ENCODE measurements at regions of chr22 and their contacts with region 1.

Region 1: GRCh38 chr22:39532215-39533071 is at the start of gene RPS19BP1:
- DNase-seq: peak; percentile 100
- H3K4me3 ChIP-seq: peak within 1 kb of the TSS; percentile 66 to 94 (median 84)
- H3K27ac ChIP-seq: peak within 1 kb of the TSS; percentile 91 to 97 (median 96)
- H3K4me1 ChIP-seq: peaks cover 37 to 54% (median 45%) of the 10 kb centered on the region in 4 donors
- H3K27me3 ChIP-seq: no peaks in the 10 kb centered on the region
- CTCF ChIP-seq: no peak
- EP300 ChIP-seq: no peak
- POLR2A ChIP-seq: peak; percentile 91
- total RNA-seq, gene RPS19BP1: 20.5 to 153 (median 97.8) TPM

Region 2: DNA sequence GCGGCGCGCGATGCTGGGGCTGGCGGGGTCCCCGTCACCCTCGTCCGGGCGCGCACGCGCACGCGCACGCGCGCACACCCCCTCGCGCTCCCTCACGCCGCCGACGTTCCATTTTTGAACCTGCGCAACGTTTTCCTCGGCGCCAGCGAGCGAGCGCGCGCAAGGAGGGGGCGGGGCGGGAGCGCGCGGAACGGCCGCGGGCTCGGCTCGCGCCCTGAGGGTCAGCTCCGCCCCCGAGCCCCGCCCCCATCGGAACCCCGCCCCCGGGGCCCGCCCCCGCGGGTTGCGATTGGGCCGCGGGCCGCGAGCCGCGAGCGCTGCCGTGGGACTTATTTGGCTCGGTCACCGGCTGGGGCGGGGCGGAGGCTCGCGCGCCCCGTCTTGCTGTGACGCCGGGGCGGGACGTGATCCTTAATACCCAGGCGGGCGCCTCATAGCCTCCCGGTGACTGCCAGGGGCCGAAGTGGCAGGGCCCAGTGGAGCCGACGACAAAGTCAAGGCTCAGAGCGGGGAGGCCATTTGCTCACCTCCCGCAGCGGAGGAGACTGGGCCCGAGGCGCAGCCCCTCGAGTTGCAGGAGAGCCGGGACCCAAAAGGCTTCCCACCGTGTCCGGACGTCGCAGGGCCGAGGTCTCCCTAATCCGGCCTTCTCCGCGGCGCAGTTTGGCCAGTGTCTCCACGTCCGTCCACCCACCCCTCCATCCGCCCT is 379.8 kb before region 1 on chr22 and contains the start of gene CBX7:
- in situ Hi-C with region 1: loop called in 1 of 4 experiments (anchors 25 kb)
- intact Hi-C with region 1: no loop called
- DNase-seq: peak; percentile 94
- H3K4me3 ChIP-seq: peak within 1 kb of the TSS; percentile 78 to 100 (median 90)
- H3K27ac ChIP-seq: peak within 1 kb of the TSS; percentile 91 to 98 (median 96)
- H3K4me1 ChIP-seq: peaks cover 14 to 52% (median 46%) of the 10 kb centered on the region in 4 donors
- H3K27me3 ChIP-seq: peaks cover 33% of the 10 kb centered on the region
- CTCF ChIP-seq: no peak
- EP300 ChIP-seq: no peak
- POLR2A ChIP-seq: peak; percentile 73
- total RNA-seq, gene CBX7: 15.3 to 129 (median 58.4) TPM

Region 3: DNA sequence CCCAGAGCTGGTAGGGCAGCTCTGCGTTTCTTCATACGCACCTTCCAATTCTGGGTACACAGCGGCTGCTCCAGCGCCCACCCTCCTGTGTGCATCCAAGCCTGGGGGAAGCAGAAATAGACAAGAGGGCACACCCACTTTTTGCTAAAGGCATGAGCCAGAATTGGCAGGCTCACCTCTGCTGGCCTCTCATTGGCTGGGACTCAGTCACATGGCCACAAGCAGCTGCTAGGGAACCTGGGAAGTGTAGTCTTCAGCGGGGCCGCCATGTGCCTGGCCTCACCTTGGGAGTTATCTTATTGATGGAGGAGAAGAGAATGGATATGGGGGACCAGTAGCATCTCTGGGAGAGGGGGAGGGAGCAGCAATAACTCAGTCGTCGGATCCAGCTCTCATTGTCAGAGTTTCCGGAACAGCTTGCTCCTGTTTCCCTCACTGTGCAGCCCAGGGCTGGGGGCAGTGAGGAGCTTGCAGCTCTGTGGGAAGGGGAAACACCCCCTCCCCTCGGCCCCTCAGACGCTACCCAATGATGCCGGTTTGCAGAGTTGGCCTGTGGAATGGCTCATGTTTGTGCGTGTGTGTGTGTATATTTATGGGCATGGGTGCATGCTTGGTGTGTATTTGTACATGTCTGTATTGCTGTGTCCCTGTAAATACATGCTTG is 42.2 kb before region 1 on chr22:
- in situ Hi-C with region 1: loop called in 1 of 4 experiments (anchors 5 kb)
- intact Hi-C with region 1: no loop called
- DNase-seq: peak; percentile 71
- H3K4me3 ChIP-seq: no peak overlapping the region
- H3K27ac ChIP-seq: no peak overlapping the region
- H3K4me1 ChIP-seq: peaks cover 0 to 11% (median 3%) of the 10 kb centered on the region in 4 donors
- H3K27me3 ChIP-seq: no peaks in the 10 kb centered on the region
- CTCF ChIP-seq: no peak
- EP300 ChIP-seq: no peak
- POLR2A ChIP-seq: no peak

Region 4: DNA sequence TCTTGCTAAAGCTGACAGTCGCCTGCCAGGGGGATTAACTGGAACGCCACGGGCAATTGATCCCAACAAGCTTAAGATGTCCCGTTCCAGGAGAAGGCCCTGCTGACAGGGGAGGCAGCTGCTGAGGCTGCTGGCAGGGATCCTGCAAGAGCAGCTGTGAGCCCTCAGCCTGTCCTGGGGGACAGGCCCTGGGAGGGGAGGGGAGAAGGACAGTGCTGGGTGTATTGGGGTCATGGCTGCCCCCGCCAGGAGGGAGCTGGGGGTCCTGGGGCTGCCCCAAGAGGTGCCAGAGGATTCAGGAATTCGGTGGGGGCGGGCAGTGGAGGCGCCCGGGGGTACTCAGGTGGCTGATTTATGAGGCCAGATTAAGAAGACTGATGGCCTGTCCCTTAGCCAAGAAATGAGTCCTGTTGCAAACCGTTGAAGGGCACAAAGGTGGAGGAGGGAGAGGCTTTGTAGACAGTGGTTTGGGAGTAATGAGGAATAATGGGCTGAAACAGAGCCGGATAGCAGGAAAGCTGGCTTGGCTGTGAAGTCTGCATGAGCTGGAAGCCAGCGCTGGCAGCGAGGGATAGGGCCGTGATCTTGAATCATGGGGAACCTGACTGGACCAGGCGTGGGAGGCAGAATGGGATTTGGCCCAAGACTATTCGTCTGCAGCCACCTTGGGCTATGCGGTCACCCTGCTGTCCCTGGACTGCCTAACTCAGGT is 171.6 kb after region 1 on chr22:
- in situ Hi-C with region 1: no loop called
- intact Hi-C with region 1: no loop called
- DNase-seq: peak; percentile 17
- H3K4me3 ChIP-seq: no peak overlapping the region
- H3K27ac ChIP-seq: no peak overlapping the region
- H3K4me1 ChIP-seq: peaks cover 0 to 5% (median 0%) of the 10 kb centered on the region in 4 donors
- H3K27me3 ChIP-seq: peaks cover 3% of the 10 kb centered on the region
- CTCF ChIP-seq: no peak
- EP300 ChIP-seq: no peak
- POLR2A ChIP-seq: no peak

Region 5: DNA sequence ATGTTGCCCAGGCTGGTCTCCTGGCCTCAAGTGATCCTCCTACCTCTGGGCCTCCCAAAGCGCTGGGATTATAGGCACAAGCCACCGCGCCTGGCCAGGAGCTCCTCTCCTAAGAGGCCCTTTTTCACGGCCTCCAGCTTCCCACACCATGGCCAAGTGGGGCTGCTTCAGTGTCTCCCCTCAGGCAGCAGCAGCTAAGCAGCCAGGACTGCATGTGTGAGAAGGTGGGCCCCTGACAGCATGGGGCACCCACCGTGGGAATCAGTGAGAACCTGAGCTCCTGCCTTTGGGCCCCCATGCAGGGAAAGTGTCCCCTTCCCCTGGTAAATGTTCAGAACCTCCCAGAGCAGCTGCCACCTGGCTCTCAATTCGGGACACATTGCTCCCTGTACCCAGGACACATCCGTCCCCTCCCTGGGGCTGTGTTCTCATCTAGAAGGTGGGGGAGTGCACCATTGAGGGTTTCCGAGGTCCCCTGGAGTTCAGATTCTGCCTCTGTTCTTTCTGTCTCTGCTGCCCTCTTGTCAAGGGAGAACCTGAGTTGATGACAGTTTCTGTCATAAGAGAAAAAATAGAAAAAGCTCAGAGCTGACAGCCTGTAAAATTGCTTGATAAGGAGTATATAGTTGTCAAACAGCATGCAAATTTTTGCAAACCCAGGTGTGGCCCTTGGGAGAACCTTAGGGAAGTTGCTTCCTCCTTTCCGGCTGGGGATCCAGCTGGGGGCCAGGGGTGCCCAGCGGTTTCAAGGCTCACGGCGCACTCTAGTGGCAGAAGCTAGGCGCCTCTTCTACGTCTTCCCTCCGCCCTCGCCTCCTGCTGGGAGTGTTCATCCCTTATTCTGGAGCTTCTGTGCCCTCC is 492.0 kb after region 1 on chr22:
- in situ Hi-C with region 1: no loop called
- intact Hi-C with region 1: loop called (anchors 5 kb)
- DNase-seq: peak; percentile 82
- H3K4me3 ChIP-seq: no peak overlapping the region
- H3K27ac ChIP-seq: peak overlapping the region in 2 of 4 donors; percentile 21 to 23
- H3K4me1 ChIP-seq: peaks cover 4 to 23% (median 5%) of the 10 kb centered on the region in 4 donors
- H3K27me3 ChIP-seq: no peaks in the 10 kb centered on the region
- CTCF ChIP-seq: peak; percentile 71 to 91 (median 83)
- EP300 ChIP-seq: no peak
- POLR2A ChIP-seq: no peak

Region 6: GRCh38 chr22:40036591-40037225 is 504.3 kb after region 1 on chr22:
- in situ Hi-C with region 1: loop called in 2 of 4 experiments (anchors 5 to 10 kb)
- intact Hi-C with region 1: no loop called
- DNase-seq: peak; percentile 68
- H3K4me3 ChIP-seq: no peak overlapping the region
- H3K27ac ChIP-seq: no peak overlapping the region
- H3K4me1 ChIP-seq: peaks cover 0 to 7% (median 0%) of the 10 kb centered on the region in 4 donors
- H3K27me3 ChIP-seq: peaks cover 3% of the 10 kb centered on the region
- CTCF ChIP-seq: peak; percentile 46 to 63 (median 52)
- EP300 ChIP-seq: no peak
- POLR2A ChIP-seq: no peak

Region 7: GRCh38 chr22:40346178-40347118 is 814.0 kb after region 1 on chr22 and contains the start of gene ADSL:
- in situ Hi-C with region 1: loop called (anchors 10 to 25 kb)
- intact Hi-C with region 1: loop called (anchors 5 kb)
- DNase-seq: peak; percentile 92
- H3K4me3 ChIP-seq: peak within 1 kb of the TSS; percentile 54 to 75 (median 58)
- H3K27ac ChIP-seq: peak within 1 kb of the TSS; percentile 84 to 95 (median 92)
- H3K4me1 ChIP-seq: peaks cover 0 to 33% (median 24%) of the 10 kb centered on the region in 4 donors
- H3K27me3 ChIP-seq: no peaks in the 10 kb centered on the region
- CTCF ChIP-seq: peak in 2 of 5 experiments; percentile 28 to 45
- EP300 ChIP-seq: peak; percentile 22
- POLR2A ChIP-seq: peak; percentile 89
- total RNA-seq, gene ADSL: 13.5 to 70.7 (median 41.8) TPM

Region 8: GRCh38 chr22:40363059-40363458 is 830.6 kb after region 1 on chr22:
- in situ Hi-C with region 1: loop called in 3 of 4 experiments (anchors 25 kb)
- intact Hi-C with region 1: no loop called
- DNase-seq: no peak
- H3K4me3 ChIP-seq: no peak overlapping the region
- H3K27ac ChIP-seq: no peak overlapping the region
- H3K4me1 ChIP-seq: peaks cover 0 to 10% (median 5%) of the 10 kb centered on the region in 4 donors
- H3K27me3 ChIP-seq: no peaks in the 10 kb centered on the region
- CTCF ChIP-seq: no peak
- EP300 ChIP-seq: no peak
- POLR2A ChIP-seq: no peak